ENCODE measurements at regions of chr2 and their contacts with region 1.

Region 1: DNA sequence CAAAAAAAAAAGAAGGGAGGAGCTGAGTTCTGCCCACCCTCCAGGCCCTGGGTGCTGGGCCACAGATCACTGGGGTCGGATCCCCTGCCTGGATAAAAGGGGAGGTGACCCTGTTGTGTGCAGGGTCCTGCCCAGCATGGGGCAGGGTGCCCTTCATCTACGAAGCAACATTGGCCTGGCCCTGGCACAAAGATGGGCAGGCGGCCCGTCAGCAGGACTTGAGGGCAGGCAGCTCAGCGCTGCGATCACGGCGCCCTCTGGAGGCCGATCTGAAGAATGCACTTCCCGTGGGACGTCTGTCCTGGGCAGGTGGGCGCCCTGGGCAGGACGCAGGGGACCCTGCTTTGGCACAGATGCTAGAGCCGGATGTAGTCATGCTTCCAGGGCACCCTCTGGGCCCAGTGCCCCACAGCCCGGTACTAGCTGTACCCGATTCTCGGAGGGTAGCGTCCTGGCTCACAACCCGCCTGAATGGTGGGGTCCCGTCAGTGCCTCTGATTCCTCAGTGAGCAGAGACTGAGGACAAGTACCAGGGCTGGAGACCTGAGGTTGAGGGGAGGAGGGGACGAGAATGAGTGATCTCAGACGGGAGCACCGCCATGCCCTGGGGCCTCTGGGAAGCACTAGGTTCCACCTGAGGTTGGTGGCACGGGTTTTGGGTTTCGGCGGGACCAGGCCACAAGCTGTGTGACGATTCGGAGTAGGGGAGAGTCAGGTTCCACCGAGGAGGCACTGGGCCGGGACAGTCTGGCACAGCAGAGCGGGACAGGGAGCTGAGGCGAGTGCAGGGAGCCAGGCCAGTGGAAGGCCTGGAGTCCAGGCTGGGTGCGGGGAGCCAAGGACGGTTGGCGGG is 18.0 kb downstream of the ARID5A start:
- DNase-seq: peak; percentile 51 to 78 (median 70)
- H3K4me3 ChIP-seq: no peak overlapping the region
- H3K27ac ChIP-seq: no peak overlapping the region
- H3K4me1 ChIP-seq: peaks cover 4% of the 10 kb centered on the region
- H3K27me3 ChIP-seq: no peaks in the 10 kb centered on the region
- CTCF ChIP-seq: peak; percentile 82 to 90 (median 85)
- EP300 ChIP-seq: no peak
- POLR2A ChIP-seq: no peak

Region 2: GRCh38 chr2:96407041-96407918 is 147.2 kb before region 1 on chr2:
- intact Hi-C with region 1: loop called in 1 of 4 experiments (anchors 5 kb)
- DNase-seq: peak; percentile 24 to 60 (median 45)
- H3K4me3 ChIP-seq: no peak overlapping the region
- H3K27ac ChIP-seq: no peak overlapping the region
- H3K4me1 ChIP-seq: peaks cover 13% of the 10 kb centered on the region
- H3K27me3 ChIP-seq: no peaks in the 10 kb centered on the region
- CTCF ChIP-seq: peak; percentile 35 to 54 (median 51)
- EP300 ChIP-seq: no peak
- POLR2A ChIP-seq: no peak

Region 3: GRCh38 chr2:96960153-96960961 is 405.8 kb after region 1 on chr2:
- intact Hi-C with region 1: loop called in 1 of 4 experiments (anchors 10 kb)
- DNase-seq: peak; percentile 92 to 98 (median 94)
- H3K4me3 ChIP-seq: no peak overlapping the region
- H3K27ac ChIP-seq: no peak overlapping the region
- H3K4me1 ChIP-seq: no peaks in the 10 kb centered on the region
- H3K27me3 ChIP-seq: no peaks in the 10 kb centered on the region
- CTCF ChIP-seq: peak; percentile 92 to 96 (median 94)
- EP300 ChIP-seq: no peak
- POLR2A ChIP-seq: peak; percentile 33

Measured in ovary (tissue), 10 donors.